Endothelial cell of umbilical vein (primary cell): ENCODE measurements at regions of chr6 and their contacts with region 1.

Region 1: GRCh38 chr6:41334482-41335040 is 847 bp upstream of the NCR2 start:
- DNase-seq: no peak
- H3K4me3 ChIP-seq: no peak overlapping the region
- H3K27ac ChIP-seq: no peak overlapping the region
- H3K4me1 ChIP-seq: no peaks in the 10 kb centered on the region
- H3K27me3 ChIP-seq: peaks cover 0 to 6% of the 10 kb centered on the region in 2 experiments
- CTCF ChIP-seq: no peak
- POLR2A ChIP-seq: no peak

Region 2: GRCh38 chr6:41306187-41306854 is 28.2 kb before region 1 on chr6:
- CTCF ChIA-PET with region 1: interaction called, 22 read pairs
- POLR2A ChIA-PET with region 1: no interaction called
- dilution Hi-C with region 1: no loop called
- intact Hi-C with region 1: no loop called
- DNase-seq: peak; percentile 49
- H3K4me3 ChIP-seq: no peak overlapping the region
- H3K27ac ChIP-seq: no peak overlapping the region
- H3K4me1 ChIP-seq: no peaks in the 10 kb centered on the region
- H3K27me3 ChIP-seq: peaks cover 25 to 33% of the 10 kb centered on the region in 2 experiments
- CTCF ChIP-seq: peak; percentile 45 to 47
- POLR2A ChIP-seq: no peak

Region 3: GRCh38 chr6:42217157-42217518 is 882.6 kb after region 1 on chr6:
- CTCF ChIA-PET with region 1: no interaction called
- POLR2A ChIA-PET with region 1: no interaction called
- dilution Hi-C with region 1: no loop called
- intact Hi-C with region 1: no loop called
- DNase-seq: no peak
- H3K4me3 ChIP-seq: peak overlapping the region; percentile 49 to 99 (median 92)
- H3K27ac ChIP-seq: peak overlapping the region; percentile 77
- H3K4me1 ChIP-seq: peaks cover 5% of the 10 kb centered on the region
- H3K27me3 ChIP-seq: no peaks in the 10 kb centered on the region
- CTCF ChIP-seq: no peak
- POLR2A ChIP-seq: no peak